ENCODE measurements at regions of chr1 and their contacts with region 1.

Region 1: GRCh38 chr1:3032971-3033789 is 11.9 kb downstream of the ACTRT2 start:
- DNase-seq: no peak
- H3K4me3 ChIP-seq: no peak overlapping the region
- H3K27ac ChIP-seq: no peak overlapping the region
- H3K4me1 ChIP-seq: no peaks in the 10 kb centered on the region
- H3K27me3 ChIP-seq: peaks cover 97% of the 10 kb centered on the region
- CTCF ChIP-seq: no peak

Region 2: DNA sequence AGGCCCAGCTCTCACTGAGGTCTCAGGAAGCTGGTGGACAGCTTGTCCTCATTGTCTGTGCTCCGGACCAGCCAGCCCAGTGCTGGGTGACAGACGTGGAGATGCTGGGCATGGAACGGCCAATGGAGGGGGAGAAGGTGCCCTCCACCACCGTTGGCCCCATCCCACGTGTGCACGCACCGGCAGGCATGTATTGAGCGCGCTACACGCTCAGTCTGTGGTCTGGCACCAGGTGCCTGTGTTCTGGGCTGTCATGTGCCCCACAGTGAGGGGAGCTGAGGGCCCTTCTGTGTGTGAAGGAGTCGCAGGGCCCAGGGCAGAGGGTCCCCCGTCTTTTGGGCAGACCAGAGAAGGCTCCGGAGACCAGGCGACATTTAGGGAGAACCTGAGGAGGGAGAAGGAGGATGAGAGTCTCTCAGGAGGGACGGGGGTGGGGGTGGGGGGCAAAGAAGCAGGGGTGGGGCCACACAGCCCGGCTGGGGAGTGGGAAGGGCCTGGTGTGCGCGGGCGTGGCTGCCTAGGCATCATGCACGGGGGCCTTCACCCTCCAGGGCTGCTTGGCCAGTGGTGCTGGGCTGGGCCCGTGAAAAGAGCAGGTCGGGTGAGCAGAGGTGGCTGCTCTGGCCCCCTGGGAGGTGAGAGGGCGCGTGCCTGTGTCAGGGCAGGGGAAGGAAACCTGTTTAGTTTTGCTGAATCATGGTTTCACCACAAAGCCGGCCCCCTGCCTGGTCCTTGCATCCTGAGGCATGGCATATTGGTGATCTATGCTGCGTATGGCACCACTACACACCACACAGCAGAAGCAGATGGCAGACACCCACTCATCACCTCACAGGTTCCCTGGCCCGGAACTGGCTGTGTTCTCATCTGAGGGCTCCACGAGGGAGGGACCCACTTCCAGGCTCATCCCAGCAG is 145.0 kb before region 1 on chr1:
- CTCF ChIA-PET with region 1: no interaction called
- POLR2A ChIA-PET with region 1: no interaction called
- intact Hi-C with region 1: no loop called
- DNase-seq: no peak
- H3K4me3 ChIP-seq: no peak overlapping the region
- H3K27ac ChIP-seq: no peak overlapping the region
- H3K4me1 ChIP-seq: no peaks in the 10 kb centered on the region
- H3K27me3 ChIP-seq: peaks cover 86% of the 10 kb centered on the region
- CTCF ChIP-seq: no peak

Region 3: DNA sequence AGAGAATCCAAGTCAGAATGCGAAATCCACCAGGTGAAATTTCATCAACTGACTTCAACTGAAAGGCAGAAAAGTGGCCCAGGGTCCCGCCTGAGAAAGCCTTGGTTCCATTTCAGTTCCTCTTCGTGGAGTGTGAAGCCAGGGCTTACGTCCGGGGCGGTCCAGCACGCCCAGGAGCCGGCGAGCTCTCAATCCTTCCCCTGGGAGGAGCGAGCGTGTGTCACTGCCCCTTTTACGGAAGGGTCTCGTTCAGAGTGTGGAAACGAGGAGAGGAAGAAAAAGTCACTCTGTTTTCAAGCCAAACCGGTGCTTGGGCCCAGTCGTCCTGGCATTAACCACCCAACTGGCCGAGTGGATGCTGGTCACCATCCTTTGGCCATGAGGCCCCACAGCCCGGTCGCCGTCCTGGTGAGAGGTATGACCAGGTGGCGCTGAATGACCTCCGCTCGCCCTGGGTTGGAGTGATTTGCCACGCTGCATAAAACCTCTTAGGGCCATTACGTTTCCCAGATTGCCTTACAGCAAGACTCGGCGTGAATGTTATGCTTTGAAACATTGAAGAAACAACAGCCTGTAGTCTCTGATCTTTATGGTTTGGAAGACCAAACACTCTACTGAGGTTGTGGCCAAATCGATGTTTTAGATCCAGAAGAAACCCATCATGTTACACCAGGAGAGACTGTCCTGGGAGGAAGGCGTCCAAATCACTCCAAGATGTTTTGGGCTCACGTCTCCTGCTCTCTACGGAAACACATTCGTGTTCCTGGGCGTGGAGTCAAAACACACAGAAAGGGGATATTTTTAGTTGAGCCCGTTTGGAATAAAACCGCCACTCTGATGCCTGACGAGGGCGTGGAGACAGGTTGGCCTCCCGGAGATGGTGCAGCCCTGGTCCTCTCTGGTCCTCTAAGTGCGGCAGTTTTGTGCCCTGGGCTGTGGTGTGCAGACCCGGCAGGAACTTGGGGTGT is 105.5 kb before region 1 on chr1:
- CTCF ChIA-PET with region 1: no interaction called
- POLR2A ChIA-PET with region 1: no interaction called
- intact Hi-C with region 1: no loop called
- DNase-seq: no peak
- H3K4me3 ChIP-seq: no peak overlapping the region
- H3K27ac ChIP-seq: no peak overlapping the region
- H3K4me1 ChIP-seq: no peaks in the 10 kb centered on the region
- H3K27me3 ChIP-seq: peaks cover 100% of the 10 kb centered on the region
- CTCF ChIP-seq: no peak

Region 4: GRCh38 chr1:3345792-3346191 is 312.6 kb after region 1 on chr1:
- CTCF ChIA-PET with region 1: no interaction called
- POLR2A ChIA-PET with region 1: interaction called, 16 read pairs
- intact Hi-C with region 1: no loop called
- DNase-seq: no peak
- H3K4me3 ChIP-seq: no peak overlapping the region
- H3K27ac ChIP-seq: no peak overlapping the region
- H3K4me1 ChIP-seq: no peaks in the 10 kb centered on the region
- H3K27me3 ChIP-seq: peaks cover 100% of the 10 kb centered on the region
- CTCF ChIP-seq: no peak

Measured in PC-9 (cell line).